Posterior vena cava (tissue), 2 donors: ENCODE measurements at regions of chr4 and their contacts with region 1.

Region 1: DNA sequence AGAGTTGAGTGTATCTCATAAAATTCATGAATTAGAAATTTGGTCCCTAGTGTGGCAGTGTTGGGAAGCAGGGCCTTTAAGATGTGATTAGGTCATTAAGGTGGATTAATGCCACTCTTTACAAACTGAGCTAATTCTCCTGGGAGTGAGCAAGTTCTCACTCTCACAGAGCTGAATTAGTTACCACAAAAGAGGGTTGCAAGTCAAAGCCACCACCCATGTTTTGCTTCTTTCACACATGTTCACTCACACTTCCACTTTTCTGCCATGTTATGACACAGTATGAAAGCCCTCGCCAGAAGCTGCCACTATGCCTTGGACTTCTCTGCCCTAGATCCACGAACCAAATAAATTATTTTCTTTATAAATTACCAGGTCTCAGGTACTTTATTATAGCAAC is 332.1 kb downstream of the ARAP2 start:
- DNase-seq: no peak

Region 2: DNA sequence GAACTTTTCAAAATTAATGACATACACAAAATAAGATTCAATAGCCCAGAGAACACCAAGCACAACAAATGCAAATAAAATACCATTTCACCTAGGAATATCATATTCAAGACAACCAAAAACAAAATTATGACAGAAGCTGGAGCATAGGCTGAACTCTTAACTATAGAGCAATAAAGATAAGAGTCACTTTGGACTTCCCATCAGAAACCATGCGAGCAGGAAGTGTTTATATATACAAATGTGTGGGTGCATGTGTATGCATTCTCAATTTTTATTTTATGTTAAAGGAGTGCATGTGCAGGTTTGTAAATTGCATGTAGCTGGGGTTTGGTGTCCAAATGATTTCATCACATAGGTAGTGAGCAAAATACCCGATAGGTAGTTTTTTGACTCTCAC is 40.6 kb after region 1 on chr4:
- intact Hi-C with region 1: loop called in 1 of 2 experiments (anchors 1 kb)
- DNase-seq: no peak

Region 3: GRCh38 chr4:35965300-35965699 is 53.1 kb after region 1 on chr4:
- intact Hi-C with region 1: no loop called
- DNase-seq: no peak

Region 4: DNA sequence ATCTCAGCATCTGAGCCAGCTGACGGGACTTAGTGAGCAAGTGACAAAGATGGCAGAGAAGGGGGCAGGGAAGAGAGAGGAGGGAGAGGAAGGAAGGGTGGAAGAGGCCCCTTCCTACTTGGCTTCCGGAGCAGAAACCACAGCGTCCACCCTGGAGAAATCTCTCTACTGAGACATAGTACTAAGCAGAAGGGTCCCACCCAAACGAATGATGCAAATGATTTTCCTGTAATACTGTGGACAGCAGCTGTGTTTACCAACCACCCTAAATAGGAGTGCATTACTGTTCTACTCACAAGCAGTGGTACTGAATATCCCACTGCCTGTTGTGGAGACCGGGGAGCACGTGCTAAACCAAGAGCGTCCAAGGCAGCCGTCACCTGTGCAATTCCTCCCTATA is 398.6 kb after region 1 on chr4:
- intact Hi-C with region 1: no loop called
- DNase-seq: no peak